Posterior cingulate gyrus (tissue), 11 donors: ENCODE measurements at regions of chr1 and their contacts with region 1.

Region 1: GRCh38 chr1:202888531-202889360 is at the start of gene RABIF:
- DNase-seq: peak; percentile 93 to 99 (median 96)

Region 2: GRCh38 chr1:202728951-202729350 is 159.8 kb before region 1 on chr1:
- intact Hi-C with region 1: no loop called
- DNase-seq: no peak

Region 3: GRCh38 chr1:202810615-202811295 is 78.0 kb before region 1 on chr1 and contains the start of gene PCAT6:
- intact Hi-C with region 1: loop called (anchors 2 kb)
- DNase-seq: peak; percentile 88 to 99 (median 94)

Region 4: DNA sequence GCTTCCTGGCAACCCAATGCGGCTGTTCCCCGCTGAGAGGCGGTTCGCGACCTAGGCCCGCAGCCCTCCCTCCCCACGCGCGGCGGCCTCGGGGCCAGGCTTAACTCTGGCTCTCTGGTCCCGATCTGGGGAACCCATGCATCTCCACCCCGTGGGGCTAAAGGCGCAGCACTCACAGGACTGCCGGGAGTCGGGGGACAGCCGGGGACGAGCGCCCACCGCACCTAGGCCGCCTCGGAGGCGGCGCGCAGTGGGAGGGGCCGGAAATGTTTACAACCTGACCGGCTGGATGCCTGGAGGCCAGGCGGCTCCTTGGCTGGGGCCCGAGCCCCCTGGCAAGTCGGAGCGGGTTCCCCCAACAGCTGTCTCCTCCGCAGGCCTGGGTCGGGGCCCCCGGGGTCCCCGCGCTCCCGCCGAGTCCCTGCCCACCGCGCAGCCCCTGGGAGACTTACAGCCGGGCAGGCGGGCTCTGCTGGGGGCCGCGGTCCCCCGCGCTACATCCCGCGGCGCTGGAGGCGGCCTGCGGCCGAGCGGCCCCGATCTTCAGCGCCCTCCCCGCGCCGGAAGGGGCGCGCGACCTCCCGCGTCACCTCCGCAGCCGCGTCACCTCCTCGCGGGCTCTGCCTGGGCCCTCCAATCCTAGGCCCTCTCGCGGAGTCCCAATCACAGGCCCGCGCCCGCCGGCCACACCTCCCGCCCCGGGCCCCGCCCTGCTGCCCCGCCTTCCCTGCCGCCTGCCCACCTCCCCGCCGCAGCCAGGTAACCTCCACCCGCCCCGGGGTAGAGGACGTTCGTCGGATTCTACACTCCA is 69.2 kb after region 1 on chr1 and contains the start of gene ADIPOR1:
- intact Hi-C with region 1: no loop called
- DNase-seq: peak; percentile 84 to 99 (median 93)

Region 5: DNA sequence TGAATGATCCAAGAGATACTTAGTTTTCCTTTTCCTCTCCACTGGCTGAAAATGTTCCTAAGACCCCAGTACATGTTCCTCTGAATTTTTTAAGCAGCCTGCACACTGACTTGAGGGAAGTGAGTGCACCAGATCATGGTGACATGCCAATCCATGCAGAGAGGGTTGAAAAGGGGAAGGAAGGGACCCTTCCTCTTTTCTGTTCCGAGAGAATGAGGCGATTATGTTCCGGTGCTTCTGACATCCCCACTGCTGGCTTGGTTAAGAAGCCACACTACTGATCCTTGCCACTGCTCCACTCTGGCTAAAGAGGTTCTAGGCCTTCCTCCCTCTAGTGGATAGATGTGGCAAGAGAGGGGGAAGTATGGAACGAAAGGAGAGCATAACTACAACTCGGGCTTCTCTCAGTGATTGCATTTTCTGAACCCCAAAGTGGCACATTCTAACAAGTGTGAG is 80.1 kb after region 1 on chr1:
- intact Hi-C with region 1: loop called (anchors 2 kb)
- DNase-seq: peak in 3 of 10 donors; percentile 11 to 22 (median 18)